Calu3 (cell line): ENCODE measurements at regions of chr1 and their contacts with region 1.

Region 1: GRCh38 chr1:156383023-156383422 is 14.0 kb downstream of the RHBG start:
- DNase-seq: peak; percentile 82
- H3K4me3 Mint-ChIP-seq: no peak overlapping the region
- H3K27ac Mint-ChIP-seq: no peak overlapping the region
- H3K4me1 Mint-ChIP-seq: no peaks in the 10 kb centered on the region
- H3K27me3 Mint-ChIP-seq: peaks cover 33% of the 10 kb centered on the region
- CTCF ChIP-seq: peak; percentile 94

Region 2: DNA sequence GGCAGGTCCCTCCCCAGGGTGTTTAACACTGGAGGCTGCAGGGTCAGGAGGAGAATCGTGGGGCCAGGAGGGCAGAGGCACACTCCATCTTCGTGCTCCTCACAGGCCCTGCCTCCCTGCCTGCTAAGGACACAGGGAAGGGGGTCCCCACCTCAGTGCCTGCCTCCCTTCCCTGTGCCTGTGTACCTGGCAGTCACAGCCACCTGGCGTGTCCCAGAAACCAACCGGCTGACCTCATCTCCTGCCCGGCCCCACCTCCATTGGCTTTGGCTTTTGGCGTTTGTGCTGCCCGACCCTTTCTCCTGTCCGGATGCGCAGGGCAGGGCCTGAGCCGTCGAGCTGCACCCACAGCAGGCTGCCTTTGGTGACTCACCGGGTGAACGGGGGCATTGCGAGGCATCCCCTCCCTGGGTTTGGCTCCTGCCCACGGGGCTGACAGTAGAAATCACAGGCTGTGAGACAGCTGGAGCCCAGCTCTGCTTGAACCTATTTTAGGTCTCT is 141.7 kb before region 1 on chr1:
- CTCF ChIA-PET with region 1: no interaction called
- intact Hi-C with region 1: no loop called
- DNase-seq: no peak
- H3K4me3 Mint-ChIP-seq: no peak overlapping the region
- H3K27ac Mint-ChIP-seq: no peak overlapping the region
- H3K4me1 Mint-ChIP-seq: no peaks in the 10 kb centered on the region
- H3K27me3 Mint-ChIP-seq: peaks cover 19% of the 10 kb centered on the region
- CTCF ChIP-seq: no peak

Region 3: GRCh38 chr1:156371553-156372264 is 11.3 kb before region 1 on chr1:
- CTCF ChIA-PET with region 1: interaction called, 11 read pairs
- intact Hi-C with region 1: no loop called
- DNase-seq: peak; percentile 34
- H3K4me3 Mint-ChIP-seq: no peak overlapping the region
- H3K27ac Mint-ChIP-seq: no peak overlapping the region
- H3K4me1 Mint-ChIP-seq: peaks cover 7% of the 10 kb centered on the region
- H3K27me3 Mint-ChIP-seq: peaks cover 45% of the 10 kb centered on the region
- CTCF ChIP-seq: no peak

Region 4: GRCh38 chr1:156421062-156421938 is 38.3 kb after region 1 on chr1:
- CTCF ChIA-PET with region 1: interaction called, 19 read pairs
- intact Hi-C with region 1: no loop called
- DNase-seq: peak; percentile 89
- H3K4me3 Mint-ChIP-seq: peak overlapping the region; percentile 76
- H3K27ac Mint-ChIP-seq: peak overlapping the region; percentile 57
- H3K4me1 Mint-ChIP-seq: peaks cover 39% of the 10 kb centered on the region
- H3K27me3 Mint-ChIP-seq: peaks cover 100% of the 10 kb centered on the region
- CTCF ChIP-seq: no peak

Region 5: DNA sequence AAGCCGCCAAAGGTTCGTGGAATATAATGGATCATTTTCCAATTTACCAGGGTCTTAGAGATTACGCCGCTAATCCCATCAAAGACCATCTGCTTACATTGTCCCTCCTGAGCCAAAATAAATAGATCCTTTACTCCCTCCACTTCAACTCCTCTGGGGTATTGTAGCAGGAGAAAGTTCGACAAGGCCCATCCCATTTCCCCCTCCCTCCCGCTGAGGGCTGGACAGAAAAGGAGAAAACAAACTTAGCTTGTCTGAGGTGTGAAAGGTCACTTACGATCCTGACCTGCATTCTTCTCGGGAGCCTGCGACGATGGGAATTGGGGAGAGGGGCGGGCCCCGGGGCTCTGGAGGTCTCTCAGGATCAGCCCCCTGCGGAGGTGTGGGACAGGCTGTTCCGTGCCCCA is 56.8 kb after region 1 on chr1:
- CTCF ChIA-PET with region 1: interaction called, 163 read pairs
- intact Hi-C with region 1: loop called (anchors 1 kb)
- DNase-seq: no peak
- H3K4me3 Mint-ChIP-seq: no peak overlapping the region
- H3K27ac Mint-ChIP-seq: no peak overlapping the region
- H3K4me1 Mint-ChIP-seq: no peaks in the 10 kb centered on the region
- H3K27me3 Mint-ChIP-seq: peaks cover 89% of the 10 kb centered on the region
- CTCF ChIP-seq: no peak

Region 6: DNA sequence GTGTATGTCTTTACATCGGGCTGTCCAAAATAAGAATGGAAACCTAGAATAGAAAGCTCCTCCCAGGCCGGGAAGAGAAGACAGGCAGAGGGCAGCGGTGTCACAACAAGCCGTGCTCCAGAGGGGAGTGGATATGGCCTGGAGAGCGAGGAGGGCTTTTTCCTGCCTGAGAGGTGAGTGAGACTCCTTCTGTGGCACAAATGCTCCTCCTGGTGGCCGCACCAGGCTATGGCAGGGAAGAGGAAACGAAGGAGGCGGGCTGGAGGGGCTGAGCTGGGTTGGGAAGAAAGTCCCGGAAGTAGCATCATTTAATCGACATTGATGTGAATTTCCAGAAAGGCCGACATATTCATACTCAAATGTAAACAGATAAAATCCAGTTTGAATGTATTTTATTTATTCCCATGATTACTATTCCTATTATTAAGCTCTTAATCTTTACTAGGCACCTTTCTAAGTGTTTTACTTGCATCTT is 62.8 kb after region 1 on chr1:
- CTCF ChIA-PET with region 1: interaction called, 163 read pairs
- intact Hi-C with region 1: loop called (anchors 1 kb)
- DNase-seq: peak; percentile 94
- H3K4me3 Mint-ChIP-seq: no peak overlapping the region
- H3K27ac Mint-ChIP-seq: no peak overlapping the region
- H3K4me1 Mint-ChIP-seq: peaks cover under 1% of the 10 kb centered on the region
- H3K27me3 Mint-ChIP-seq: peaks cover 72% of the 10 kb centered on the region
- CTCF ChIP-seq: peak; percentile 98

Region 7: GRCh38 chr1:156608036-156608674 is 225.1 kb after region 1 on chr1:
- CTCF ChIA-PET with region 1: interaction called, 6 read pairs
- intact Hi-C with region 1: loop called (anchors 2 kb)
- DNase-seq: peak; percentile 64
- H3K4me3 Mint-ChIP-seq: no peak overlapping the region
- H3K27ac Mint-ChIP-seq: no peak overlapping the region
- H3K4me1 Mint-ChIP-seq: peaks cover 23% of the 10 kb centered on the region
- H3K27me3 Mint-ChIP-seq: no peaks in the 10 kb centered on the region
- CTCF ChIP-seq: peak; percentile 50

Region 8: DNA sequence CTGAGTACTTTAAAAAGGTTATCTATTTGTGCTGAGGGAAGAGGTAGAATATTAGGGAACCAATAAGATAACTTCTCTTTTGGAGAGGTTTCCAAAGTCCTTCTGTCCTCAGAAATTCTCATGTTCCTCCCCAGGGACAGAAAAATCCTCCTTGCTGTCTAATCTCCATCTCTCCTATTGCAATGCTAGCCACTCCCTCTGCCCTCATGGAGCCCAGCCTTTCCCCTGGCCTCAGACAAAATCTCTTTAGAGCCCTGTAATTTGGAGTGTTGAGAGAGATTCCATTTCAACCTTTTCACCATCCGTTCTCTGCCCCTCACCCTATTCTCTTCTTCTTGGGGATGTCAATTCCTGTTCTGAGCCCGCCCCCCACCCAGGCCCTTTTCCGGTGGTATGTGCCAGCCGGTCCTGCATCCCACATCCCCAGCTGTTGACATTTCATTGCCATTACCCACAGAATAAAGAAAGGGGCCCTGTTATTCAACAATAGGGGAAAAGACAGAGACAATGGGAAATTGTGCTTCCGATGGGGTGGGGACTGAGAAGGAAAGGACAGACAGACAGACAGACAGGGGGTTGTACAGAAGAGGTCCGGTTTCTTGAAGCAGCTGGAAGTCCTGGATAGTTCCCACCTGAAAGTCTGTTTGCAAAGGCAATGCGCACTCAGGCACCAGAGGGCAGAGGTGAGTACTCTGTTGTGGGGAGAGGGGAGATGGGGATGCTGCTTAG is 236.0 kb after region 1 on chr1 and contains the start of gene HAPLN2:
- CTCF ChIA-PET with region 1: no interaction called
- intact Hi-C with region 1: no loop called
- DNase-seq: peak; percentile 61
- H3K4me3 Mint-ChIP-seq: no peak within 1 kb of the TSS
- H3K27ac Mint-ChIP-seq: no peak within 1 kb of the TSS
- H3K4me1 Mint-ChIP-seq: peaks cover 11% of the 10 kb centered on the region
- H3K27me3 Mint-ChIP-seq: peaks cover 73% of the 10 kb centered on the region
- CTCF ChIP-seq: peak; percentile 60
- total RNA-seq, gene HAPLN2: 0.27 TPM in 1 of 2 replicates, not detected in the other